Lower leg skin (tissue), 4 donors: ENCODE measurements at regions of chr9 and their contacts with region 1.

Region 1: GRCh38 chr9:17859228-17859627 is 280.4 kb downstream of the SH3GL2 start:
- DNase-seq: no peak
- H3K4me3 ChIP-seq: no peak overlapping the region
- CTCF ChIP-seq: no peak
- POLR2A ChIP-seq: no peak

Region 2: GRCh38 chr9:17725399-17726010 is 133.7 kb before region 1 on chr9:
- intact Hi-C with region 1: no loop called
- DNase-seq: no peak
- H3K4me3 ChIP-seq: no peak overlapping the region
- CTCF ChIP-seq: no peak
- POLR2A ChIP-seq: no peak

Region 3: DNA sequence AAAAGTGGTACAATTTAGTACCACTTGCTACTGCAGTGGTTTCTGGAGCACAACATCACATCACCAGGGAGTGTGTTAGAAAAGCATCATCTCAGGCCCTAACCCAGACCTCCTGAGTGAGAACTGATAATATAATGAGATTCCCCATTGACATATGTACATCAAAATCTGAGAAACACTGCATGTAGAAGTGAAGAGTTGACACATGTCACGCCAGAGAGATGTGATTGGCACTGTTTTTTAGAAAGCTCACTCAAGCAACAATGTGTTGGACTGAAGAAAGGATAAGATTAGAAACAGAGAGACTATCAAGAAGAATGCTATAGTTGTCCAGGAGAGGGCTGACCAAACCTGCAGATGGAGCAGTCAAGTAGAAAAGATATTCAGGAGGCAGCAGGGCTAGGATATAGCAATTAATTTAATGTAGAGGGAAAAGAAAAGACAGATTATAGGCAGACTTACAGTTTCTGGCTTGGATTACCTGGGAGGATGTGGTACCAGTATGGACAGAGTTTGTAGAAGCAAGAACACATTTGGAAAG is 290.3 kb after region 1 on chr9:
- intact Hi-C with region 1: no loop called
- DNase-seq: no peak
- H3K4me3 ChIP-seq: no peak overlapping the region
- CTCF ChIP-seq: no peak
- POLR2A ChIP-seq: no peak

Region 4: GRCh38 chr9:19199012-19199411 is 1339.8 kb after region 1 on chr9:
- intact Hi-C with region 1: loop called (anchors 5 kb)
- DNase-seq: no peak
- H3K4me3 ChIP-seq: no peak overlapping the region
- CTCF ChIP-seq: no peak
- POLR2A ChIP-seq: no peak